Left cardiac atrium (tissue), 4 donors: ENCODE measurements at regions of chr12 and their contacts with region 1.

Region 1: GRCh38 chr12:27733052-27733656 is 22.5 kb downstream of the MRPS35 start:
- DNase-seq: no peak
- ATAC-seq: peak; percentile 47 to 58

Region 2: GRCh38 chr12:27821259-27821973 is 88.3 kb after region 1 on chr12:
- intact Hi-C with region 1: loop called in 1 of 2 experiments (anchors 5 kb)
- DNase-seq: no peak
- ATAC-seq: peak; percentile 15 to 76

Region 3: DNA sequence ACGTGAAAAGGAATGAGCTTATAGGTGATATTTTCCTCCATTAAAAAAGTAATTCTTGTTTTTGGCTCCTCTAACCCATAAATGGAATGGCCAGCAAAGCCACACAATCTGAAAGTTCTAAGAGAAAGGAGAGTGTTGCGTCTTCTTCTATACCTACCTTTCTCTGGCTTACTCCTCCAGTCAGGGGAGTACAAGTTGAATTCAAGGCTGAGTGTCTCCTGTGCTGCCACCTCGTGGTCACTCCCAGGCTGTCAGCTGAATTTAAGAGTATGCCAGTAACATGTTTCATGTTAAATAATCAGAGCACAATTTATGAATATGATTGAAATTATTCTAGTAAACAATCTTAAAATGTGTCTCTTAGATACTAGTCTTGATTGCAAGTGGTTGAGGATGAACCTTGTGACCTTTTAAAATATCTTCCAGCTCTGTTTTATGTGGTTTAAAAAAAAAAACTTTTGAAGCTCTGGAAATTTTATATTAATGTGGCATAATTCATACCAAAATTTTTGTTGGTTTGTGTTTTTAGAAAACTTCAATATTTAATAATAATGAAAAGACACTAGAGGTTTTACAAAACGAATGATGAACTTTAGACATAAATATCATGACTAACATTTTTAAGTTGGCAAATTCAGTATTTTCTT is 207.7 kb after region 1 on chr12:
- intact Hi-C with region 1: loop called (anchors 2 to 10 kb)
- DNase-seq: peak; percentile 73
- ATAC-seq: peak; percentile 65 to 79